OCI-LY7 (cell line): ENCODE measurements at regions of chr1 and their contacts with region 1.

Region 1: GRCh38 chr1:33277488-33278084 is 21.3 kb downstream of the ZNF362 start:
- DNase-seq: no peak
- H3K4me3 ChIP-seq: no peak overlapping the region
- H3K27ac ChIP-seq: no peak overlapping the region
- H3K4me1 ChIP-seq: no peaks in the 10 kb centered on the region
- CTCF ChIP-seq: no peak

Region 2: DNA sequence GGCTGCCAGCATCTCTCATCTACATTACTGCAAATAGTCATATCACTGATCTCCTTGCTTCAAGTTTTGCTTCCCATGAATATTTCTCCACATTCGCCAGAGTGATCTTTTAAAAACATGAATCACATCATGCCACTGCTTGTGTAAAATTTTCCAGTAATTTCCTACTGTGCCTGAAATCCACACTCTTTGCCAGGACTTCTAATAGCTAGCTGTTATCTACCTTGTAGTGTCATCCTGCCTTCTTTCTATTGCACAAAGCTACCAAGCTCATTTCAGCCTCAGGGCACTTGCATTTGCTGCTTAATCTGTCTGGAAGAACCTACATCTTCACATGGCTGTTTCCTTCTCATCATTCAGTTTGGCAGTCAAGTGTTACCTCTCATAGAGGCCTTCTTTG is 55.2 kb before region 1 on chr1:
- CTCF ChIA-PET with region 1: no interaction called
- POLR2A ChIA-PET with region 1: no interaction called
- intact Hi-C with region 1: loop called (anchors 2 kb)
- DNase-seq: no peak
- H3K4me3 ChIP-seq: no peak overlapping the region
- H3K27ac ChIP-seq: no peak overlapping the region
- H3K4me1 ChIP-seq: no peaks in the 10 kb centered on the region
- CTCF ChIP-seq: no peak

Region 3: GRCh38 chr1:33327587-33328315 is 50.2 kb after region 1 on chr1:
- CTCF ChIA-PET with region 1: no interaction called
- POLR2A ChIA-PET with region 1: no interaction called
- intact Hi-C with region 1: no loop called
- DNase-seq: no peak
- H3K4me3 ChIP-seq: no peak overlapping the region
- H3K27ac ChIP-seq: no peak overlapping the region
- H3K4me1 ChIP-seq: peaks cover 6% of the 10 kb centered on the region
- CTCF ChIP-seq: no peak

Region 4: GRCh38 chr1:33649759-33650158 is 372.2 kb after region 1 on chr1:
- CTCF ChIA-PET with region 1: no interaction called
- POLR2A ChIA-PET with region 1: no interaction called
- intact Hi-C with region 1: no loop called
- DNase-seq: no peak
- H3K4me3 ChIP-seq: no peak overlapping the region
- H3K27ac ChIP-seq: no peak overlapping the region
- H3K4me1 ChIP-seq: no peaks in the 10 kb centered on the region
- CTCF ChIP-seq: no peak